Ascending aorta (tissue), 2 donors: ENCODE measurements at regions of chr5 and their contacts with region 1.

Region 1: DNA sequence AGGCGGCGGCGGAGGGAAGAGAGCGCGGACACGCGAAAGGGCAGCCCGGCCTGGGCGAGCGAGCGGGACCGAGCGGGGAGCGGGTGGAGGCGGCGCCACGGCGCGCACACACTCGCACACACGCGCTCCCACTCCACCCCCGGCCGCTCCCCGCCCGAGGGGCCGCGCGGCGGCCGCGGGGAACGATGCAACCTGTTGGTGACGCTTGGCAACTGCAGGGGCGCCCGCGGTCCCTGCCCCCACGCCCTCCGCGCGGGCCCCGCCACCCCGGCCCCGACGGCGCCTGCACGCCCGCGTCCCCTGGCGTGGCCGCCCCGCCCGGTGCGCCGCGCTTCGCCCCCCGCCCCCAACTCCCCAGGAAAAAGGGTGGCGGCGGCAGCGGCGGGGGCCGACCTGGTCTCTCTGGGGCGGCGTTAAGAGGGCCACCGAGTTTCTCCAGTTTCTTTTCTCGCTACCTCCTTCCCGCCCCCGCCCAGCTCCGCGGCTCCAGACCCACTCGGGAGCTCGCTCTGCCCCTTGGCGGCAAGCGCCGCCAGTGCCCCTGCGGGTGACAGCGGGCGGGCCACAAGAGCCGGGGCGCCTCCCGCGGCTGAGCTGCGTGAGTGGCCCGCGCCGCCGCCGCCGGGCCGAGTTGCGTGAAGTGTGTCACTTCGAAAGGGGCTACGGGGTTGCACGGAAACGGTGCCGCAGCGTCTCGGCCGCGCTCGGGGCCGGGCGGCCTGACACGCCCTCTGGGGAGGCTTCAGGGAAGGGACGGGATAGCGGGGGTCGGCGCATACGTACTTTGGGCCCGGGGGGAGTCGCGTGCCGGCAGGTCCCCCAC is at the start of gene NR3C1:
- DNase-seq: peak; percentile 28 to 92
- H3K4me3 ChIP-seq: peak within 1 kb of the TSS; percentile 70 to 91
- H3K27ac ChIP-seq: peak within 1 kb of the TSS; percentile 98 to 99
- H3K4me1 ChIP-seq: peaks cover 0 to 2% of the 10 kb centered on the region in 2 donors
- H3K27me3 ChIP-seq: no peaks in the 10 kb centered on the region
- CTCF ChIP-seq: peak; percentile 21 to 60 (median 55)
- total RNA-seq, gene NR3C1: 18.4 TPM

Region 2: DNA sequence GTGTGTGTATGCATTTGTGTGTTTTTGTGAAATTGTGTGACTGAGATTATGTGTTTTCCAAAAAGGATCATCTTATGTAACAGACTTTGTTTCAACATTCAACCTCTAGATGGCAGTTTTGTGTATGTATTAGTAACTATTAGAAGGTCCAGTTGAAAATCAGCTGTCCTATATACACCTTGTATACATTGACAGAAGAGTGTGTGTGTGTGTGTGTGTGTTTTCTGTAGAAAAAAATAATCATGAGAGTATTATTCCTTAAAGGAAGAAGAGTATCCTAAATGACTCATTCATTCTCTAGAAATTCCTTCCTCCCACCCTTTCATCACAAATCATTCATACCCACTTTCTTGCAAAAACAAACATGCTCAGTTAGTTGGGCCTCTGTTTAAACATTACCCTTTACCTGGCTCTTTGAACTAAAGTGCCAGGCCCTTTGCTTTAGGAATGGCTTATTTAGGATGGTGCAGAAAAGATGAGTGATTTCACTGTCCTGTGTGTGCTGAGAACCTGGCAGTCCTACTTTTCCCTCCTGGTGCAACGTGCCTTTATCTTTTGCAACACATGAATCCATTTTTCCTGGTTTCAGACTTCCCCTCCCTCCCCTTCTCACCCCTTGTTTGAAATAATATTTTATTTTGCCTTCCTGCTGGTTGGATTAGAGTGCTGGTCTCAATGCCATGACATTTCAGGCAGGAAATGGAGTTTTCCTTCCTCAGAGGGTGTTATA is 481.4 kb before region 1 on chr5:
- intact Hi-C with region 1: loop called (anchors 2 kb)
- DNase-seq: no peak
- H3K4me3 ChIP-seq: no peak overlapping the region
- H3K27ac ChIP-seq: no peak overlapping the region
- H3K4me1 ChIP-seq: no peaks in the 10 kb centered on the region
- H3K27me3 ChIP-seq: no peaks in the 10 kb centered on the region
- CTCF ChIP-seq: peak; percentile 28 to 51 (median 34)

Region 3: GRCh38 chr5:143063175-143063970 is 340.4 kb before region 1 on chr5:
- intact Hi-C with region 1: loop called (anchors 5 kb)
- DNase-seq: peak in 1 of 2 donors; percentile 14
- H3K4me3 ChIP-seq: no peak overlapping the region
- H3K27ac ChIP-seq: peak overlapping the region; percentile 53
- H3K4me1 ChIP-seq: peaks cover 4 to 42% of the 10 kb centered on the region in 2 donors
- H3K27me3 ChIP-seq: no peaks in the 10 kb centered on the region
- CTCF ChIP-seq: no peak

Region 4: DNA sequence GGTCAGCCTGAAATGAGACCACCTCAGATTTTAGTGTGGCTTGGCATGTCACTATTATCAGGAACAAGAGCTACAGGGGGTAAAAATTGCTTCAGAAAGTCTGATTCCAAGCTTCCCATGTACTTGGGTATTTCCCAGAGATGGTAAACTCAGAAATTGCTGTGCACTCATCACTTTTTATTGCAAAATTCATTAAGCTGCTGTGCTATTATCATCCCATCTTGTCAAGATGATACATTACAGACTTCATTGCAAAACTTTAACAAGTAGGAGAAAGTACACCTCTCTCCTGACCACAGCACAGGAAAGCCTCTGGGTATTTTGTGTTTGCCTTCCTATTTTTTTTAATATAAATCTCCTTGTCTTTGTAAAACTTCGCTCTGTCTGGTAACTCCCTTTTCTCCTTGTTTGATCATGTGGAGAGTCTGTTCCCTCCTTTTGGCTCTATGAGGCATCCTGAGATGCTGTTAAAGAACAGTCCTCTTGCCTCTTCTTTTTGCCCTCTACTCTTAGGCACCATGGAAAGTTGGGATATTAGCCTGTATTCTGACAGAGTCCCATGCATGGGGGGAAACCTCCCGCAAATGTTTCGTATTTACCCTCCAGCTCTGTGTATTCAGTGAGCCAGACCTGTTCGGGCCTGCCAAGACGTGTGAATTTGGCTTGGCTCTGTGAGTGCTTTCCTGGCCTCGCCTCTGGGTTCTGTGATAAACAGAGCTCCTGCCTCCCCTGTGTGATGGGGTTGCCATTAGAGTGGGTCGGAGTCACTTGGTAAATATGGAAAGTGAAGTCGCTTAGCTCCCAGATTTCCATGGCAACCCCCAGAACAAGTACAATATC is 261.0 kb before region 1 on chr5:
- intact Hi-C with region 1: loop called (anchors 5 kb)
- DNase-seq: peak; percentile 50 to 90
- H3K4me3 ChIP-seq: no peak overlapping the region
- H3K27ac ChIP-seq: peak overlapping the region; percentile 76 to 77
- H3K4me1 ChIP-seq: peaks cover 13 to 48% of the 10 kb centered on the region in 2 donors
- H3K27me3 ChIP-seq: no peaks in the 10 kb centered on the region
- CTCF ChIP-seq: no peak

Region 5: DNA sequence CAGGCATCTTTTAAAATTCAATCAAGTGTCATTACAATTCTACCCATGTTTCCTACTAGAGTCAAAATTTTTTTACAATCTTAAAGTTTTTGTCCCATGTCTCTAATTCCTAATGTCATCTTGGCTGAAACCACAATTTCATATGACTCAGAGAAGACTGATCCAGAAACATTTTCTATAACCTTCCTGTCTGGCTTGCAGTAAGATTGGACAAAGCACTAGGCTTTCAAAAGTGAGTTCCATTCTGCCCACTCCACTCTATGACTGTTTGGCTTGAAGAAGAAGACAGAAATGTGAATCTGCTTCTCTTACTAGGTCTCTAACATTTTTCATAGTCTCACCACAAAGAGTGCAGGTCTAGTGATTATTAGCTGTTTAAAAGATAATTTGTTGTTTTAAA is 89.1 kb before region 1 on chr5:
- intact Hi-C with region 1: loop called (anchors 5 kb)
- DNase-seq: no peak
- H3K4me3 ChIP-seq: no peak overlapping the region
- H3K27ac ChIP-seq: peak overlapping the region in 1 of 2 donors; percentile 6
- H3K4me1 ChIP-seq: peaks cover 0 to 34% of the 10 kb centered on the region in 2 donors
- H3K27me3 ChIP-seq: no peaks in the 10 kb centered on the region
- CTCF ChIP-seq: no peak

Region 6: GRCh38 chr5:143824851-143825720 is 421.3 kb after region 1 on chr5:
- intact Hi-C with region 1: loop called (anchors 2 kb)
- DNase-seq: peak; percentile 12 to 86
- H3K4me3 ChIP-seq: no peak overlapping the region
- H3K27ac ChIP-seq: no peak overlapping the region
- H3K4me1 ChIP-seq: no peaks in the 10 kb centered on the region
- H3K27me3 ChIP-seq: no peaks in the 10 kb centered on the region
- CTCF ChIP-seq: peak; percentile 71 to 98 (median 84)